ENCODE measurements at regions of chr5 and their contacts with region 1.

Region 1: DNA sequence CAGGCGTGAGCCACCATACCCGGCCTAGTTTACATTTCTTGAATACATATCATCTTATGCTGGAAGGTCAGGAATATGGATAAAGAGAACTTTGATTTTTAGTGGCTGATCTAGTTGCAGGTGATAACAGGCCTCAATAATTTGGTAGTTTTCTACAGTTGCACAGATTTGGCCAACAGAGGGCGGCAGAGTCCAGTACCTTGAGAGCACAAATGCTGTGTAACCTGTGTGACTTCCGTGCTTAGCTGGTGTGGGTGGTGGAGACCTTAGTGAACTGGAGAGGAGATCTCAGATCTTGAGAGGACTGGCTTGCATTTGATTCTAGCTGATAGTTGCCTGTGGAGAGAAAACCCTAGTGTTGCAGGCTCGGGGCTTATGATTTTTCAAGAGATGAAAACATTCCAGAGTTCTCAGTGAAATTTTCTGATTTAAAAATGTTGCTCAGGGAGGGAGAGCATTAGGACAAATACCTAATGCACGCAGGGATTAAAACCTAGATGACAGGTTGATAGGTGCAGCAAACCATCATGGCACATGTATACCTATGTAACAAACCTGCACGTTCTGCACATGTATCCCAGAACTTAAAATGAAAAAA is 17.4 kb upstream of the GPR151 start:
- DNase-seq: peak; percentile 83
- H3K4me3 Mint-ChIP-seq: no peak overlapping the region
- H3K27ac Mint-ChIP-seq: no peak overlapping the region
- H3K4me1 Mint-ChIP-seq: peaks cover 4% of the 10 kb centered on the region
- H3K27me3 Mint-ChIP-seq: peaks cover under 1% of the 10 kb centered on the region

Region 2: DNA sequence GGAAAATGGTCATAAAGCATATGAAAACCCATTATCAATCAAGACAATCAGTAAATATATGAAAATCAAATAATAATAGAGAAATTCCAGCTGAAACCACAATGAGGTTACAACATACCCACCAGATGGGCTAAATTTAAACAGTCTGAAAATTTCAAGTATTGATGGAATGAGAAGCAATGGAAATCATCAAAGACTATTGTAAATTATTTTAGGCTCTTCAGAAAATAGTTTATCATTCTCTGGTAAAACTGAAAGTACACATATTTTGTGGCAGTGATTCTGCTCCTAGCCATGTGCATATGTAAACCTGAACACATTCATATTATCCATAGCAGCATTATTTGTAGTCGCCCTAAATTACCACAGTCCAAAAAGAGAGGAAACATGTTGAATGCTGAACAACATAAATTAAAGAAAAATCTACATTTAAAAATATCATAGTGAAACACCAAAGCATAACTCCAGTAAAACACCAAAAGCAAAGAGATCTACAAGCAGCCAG is 913.5 kb before region 1 on chr5:
- CTCF ChIA-PET with region 1: no interaction called
- POLR2A ChIA-PET with region 1: no interaction called
- intact Hi-C with region 1: no loop called
- DNase-seq: no peak
- H3K4me3 Mint-ChIP-seq: no peak overlapping the region
- H3K27ac Mint-ChIP-seq: no peak overlapping the region
- H3K4me1 Mint-ChIP-seq: no peaks in the 10 kb centered on the region
- H3K27me3 Mint-ChIP-seq: no peaks in the 10 kb centered on the region

Region 3: DNA sequence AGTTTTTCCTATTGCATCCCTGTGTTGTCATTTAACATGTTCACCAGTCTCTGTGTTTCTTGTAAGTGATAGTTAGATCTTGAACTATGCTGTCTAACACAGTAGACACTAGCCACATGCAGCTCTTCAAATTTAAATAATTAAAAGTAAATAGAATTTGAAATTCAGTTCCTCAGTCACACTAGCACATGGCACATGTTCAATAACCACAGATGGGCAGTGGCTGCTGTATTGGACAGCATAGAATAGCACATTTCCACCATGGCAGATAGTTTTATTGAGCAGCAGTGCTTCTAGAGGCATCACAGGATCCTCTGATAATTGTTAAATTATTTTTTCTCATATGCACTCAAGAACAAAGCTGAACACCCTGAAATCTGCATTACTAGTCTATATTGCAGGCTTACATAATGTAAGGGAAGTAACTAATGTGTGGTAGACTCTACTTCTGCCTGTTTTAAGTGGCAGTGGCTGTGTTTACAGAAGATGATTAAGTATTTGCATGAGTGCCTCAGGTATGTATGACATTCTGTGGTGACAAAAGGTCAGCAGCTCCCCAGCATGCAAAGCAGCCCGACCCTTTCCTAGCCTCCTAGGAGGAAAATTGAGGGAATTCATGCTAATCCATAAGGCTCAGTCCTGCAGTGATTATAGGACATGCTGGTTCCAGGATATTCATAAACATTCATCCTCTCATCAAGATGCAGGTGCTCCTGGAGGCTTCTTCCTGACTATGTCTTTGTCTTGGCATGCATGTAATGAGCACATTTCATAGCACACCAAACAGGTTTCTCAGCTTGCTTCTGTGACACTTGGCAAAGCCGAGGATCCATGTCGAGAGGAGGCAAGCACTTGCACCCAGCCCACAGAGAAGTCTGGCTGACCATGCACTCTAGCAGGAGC is 551.5 kb before region 1 on chr5:
- CTCF ChIA-PET with region 1: no interaction called
- POLR2A ChIA-PET with region 1: no interaction called
- intact Hi-C with region 1: no loop called
- DNase-seq: no peak
- H3K4me3 Mint-ChIP-seq: no peak overlapping the region
- H3K27ac Mint-ChIP-seq: no peak overlapping the region
- H3K4me1 Mint-ChIP-seq: no peaks in the 10 kb centered on the region
- H3K27me3 Mint-ChIP-seq: peaks cover 6% of the 10 kb centered on the region

Region 4: DNA sequence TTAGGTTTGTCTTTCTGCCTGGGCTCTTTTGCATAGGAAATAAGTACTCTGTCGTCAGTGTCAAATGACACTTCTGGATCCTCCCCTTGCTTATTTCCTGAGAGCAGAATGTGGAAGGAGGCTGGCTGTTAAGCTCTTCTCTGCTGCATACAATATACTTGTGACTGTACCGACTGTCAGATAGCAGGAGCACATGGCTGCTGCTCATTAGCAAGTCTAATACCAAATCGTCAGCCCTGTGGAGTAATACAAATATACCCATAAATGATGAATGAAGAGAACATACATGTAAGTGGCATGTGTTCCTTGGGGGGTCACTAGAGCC is 17.2 kb before region 1 on chr5 and contains the start of gene GPR151:
- CTCF ChIA-PET with region 1: interaction called, 23 read pairs
- POLR2A ChIA-PET with region 1: no interaction called
- intact Hi-C with region 1: no loop called
- DNase-seq: no peak
- H3K4me3 Mint-ChIP-seq: no peak within 1 kb of the TSS
- H3K27ac Mint-ChIP-seq: no peak within 1 kb of the TSS
- H3K4me1 Mint-ChIP-seq: no peaks in the 10 kb centered on the region
- H3K27me3 Mint-ChIP-seq: no peaks in the 10 kb centered on the region
- total RNA-seq, gene GPR151: not detected

Region 5: DNA sequence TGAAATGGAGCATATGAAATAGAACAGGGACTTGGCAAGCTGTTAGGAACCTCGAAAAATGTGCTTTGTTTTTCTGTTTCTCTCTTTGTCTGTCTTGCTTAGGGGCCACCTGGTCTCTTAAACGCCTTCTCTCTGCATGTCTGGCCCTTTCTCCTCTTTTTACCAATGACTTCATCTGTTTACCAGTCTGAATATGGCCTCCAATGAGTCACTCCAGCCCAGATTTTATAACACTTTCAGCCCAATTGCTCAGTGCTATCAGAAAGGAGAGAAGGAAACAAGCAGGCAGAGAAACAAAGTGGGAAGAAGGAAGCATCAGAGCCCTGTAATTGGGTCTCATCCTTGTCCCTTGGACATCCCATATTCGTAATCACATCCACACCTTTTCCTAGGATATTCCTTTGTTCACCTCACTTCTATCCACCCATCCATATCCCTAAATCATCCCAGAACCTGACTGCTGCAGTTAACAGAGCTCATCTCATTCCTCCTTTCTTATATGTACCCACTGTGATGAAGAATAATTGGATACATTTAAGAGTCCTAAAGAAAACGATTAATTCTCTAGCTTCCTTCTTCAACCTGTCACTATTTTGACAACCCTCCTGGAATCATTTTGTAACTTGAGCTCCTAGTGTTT is 134.4 kb after region 1 on chr5:
- CTCF ChIA-PET with region 1: interaction called, 5 read pairs
- POLR2A ChIA-PET with region 1: no interaction called
- intact Hi-C with region 1: loop called (anchors 5 kb)
- DNase-seq: no peak
- H3K4me3 Mint-ChIP-seq: no peak overlapping the region
- H3K27ac Mint-ChIP-seq: no peak overlapping the region
- H3K4me1 Mint-ChIP-seq: peaks cover 4% of the 10 kb centered on the region
- H3K27me3 Mint-ChIP-seq: no peaks in the 10 kb centered on the region